HepG2 (cell line): ENCODE measurements at regions of chr2 and their contacts with region 1.

Region 1: DNA sequence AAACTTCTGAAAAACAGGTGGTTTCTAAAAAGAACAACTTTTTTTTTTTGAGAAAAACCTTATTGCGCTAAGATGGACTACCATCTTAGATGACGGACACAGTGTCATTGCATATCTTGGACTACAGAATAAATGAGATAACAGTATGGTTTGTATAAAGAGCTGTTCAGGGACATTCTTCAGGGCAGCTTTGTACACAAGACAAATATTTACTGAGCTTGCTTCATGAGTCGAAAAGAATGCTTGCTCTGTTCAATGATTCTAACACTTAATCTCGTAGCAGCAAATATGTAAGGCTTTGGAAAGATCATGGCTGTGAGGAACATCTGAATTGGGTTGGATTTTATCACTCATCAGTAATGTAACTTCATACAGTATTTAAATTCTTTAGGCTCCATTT is 282.5 kb upstream of the CWC22 start:
- DNase-seq: peak; percentile 68
- ATAC-seq: peak; percentile 98
- H3K4me3 ChIP-seq: no peak overlapping the region
- H3K27ac ChIP-seq: no peak overlapping the region
- H3K4me1 ChIP-seq: peaks cover 19% of the 10 kb centered on the region
- H3K27me3 ChIP-seq: no peaks in the 10 kb centered on the region
- CTCF ChIP-seq: no peak
- EP300 ChIP-seq: peak in 1 of 2 experiments; percentile 71; a peak in 2 of 4 replicates
- POLR2A ChIP-seq: no peak
- RAD21 ChIP-seq: no peak

Region 2: GRCh38 chr2:180255981-180256380 is 33.6 kb before region 1 on chr2:
- CTCF ChIA-PET with region 1: no interaction called
- POLR2A ChIA-PET with region 1: no interaction called
- in situ Hi-C with region 1: no loop called
- intact Hi-C with region 1: loop called (anchors 1 kb)
- DNase-seq: no peak
- ATAC-seq: no peak
- H3K4me3 ChIP-seq: no peak overlapping the region
- H3K27ac ChIP-seq: no peak overlapping the region
- H3K4me1 ChIP-seq: peaks cover 10% of the 10 kb centered on the region
- H3K27me3 ChIP-seq: no peaks in the 10 kb centered on the region
- CTCF ChIP-seq: no peak
- EP300 ChIP-seq: no peak
- POLR2A ChIP-seq: no peak
- RAD21 ChIP-seq: no peak

Region 3: GRCh38 chr2:180314086-180314485 is 24.5 kb after region 1 on chr2:
- CTCF ChIA-PET with region 1: no interaction called
- POLR2A ChIA-PET with region 1: no interaction called
- in situ Hi-C with region 1: no loop called
- intact Hi-C with region 1: loop called (anchors 1 kb)
- DNase-seq: no peak
- ATAC-seq: no peak
- H3K4me3 ChIP-seq: no peak overlapping the region
- H3K27ac ChIP-seq: no peak overlapping the region
- H3K4me1 ChIP-seq: no peaks in the 10 kb centered on the region
- H3K27me3 ChIP-seq: no peaks in the 10 kb centered on the region
- CTCF ChIP-seq: no peak
- EP300 ChIP-seq: no peak
- POLR2A ChIP-seq: no peak
- RAD21 ChIP-seq: no peak